ENCODE measurements at regions of chr3 and their contacts with region 1.

Region 1: DNA sequence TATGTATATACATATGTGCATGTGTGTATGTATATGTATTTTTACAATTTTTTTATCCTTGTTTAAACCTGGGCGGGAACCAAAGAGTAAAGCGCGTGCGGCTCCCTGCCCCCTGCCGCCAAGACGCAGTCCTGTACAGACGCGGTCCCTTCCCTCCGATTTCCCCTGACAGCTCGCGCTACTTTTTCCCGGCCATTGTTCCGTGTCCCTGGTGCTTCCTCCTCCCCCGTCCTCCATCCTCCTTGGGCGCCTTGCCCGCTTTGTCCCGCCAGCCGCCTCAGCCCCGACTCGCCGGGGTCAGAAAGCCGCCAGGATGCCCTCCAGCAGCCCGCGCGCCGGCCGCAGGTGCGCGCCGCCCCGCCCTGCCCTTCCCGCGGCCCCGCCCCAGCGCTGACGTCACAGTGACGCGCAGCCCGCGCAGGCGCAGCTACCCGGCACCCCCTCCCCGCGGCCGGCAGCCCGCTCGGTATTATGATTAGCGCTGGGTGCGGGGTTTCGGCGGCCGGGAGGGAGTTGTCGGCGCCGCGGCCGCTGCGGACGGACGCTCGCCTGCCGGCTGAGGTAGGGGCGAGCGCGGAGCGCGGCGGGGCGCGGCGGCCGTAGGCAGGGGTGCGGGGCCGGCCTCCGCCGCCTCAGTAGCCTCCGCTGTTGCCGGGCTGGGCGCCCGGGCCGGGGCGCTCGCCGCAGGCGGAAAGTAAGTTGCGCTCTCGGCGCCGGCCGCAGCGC is at the start of gene SNRK:
- DNase-seq: peak; percentile 86 to 97 (median 92)
- H3K4me3 ChIP-seq: peak within 1 kb of the TSS; percentile 84 to 88
- H3K4me3 Mint-ChIP-seq: peak within 1 kb of the TSS; percentile 98 to 100 (median 99)
- H3K27ac ChIP-seq: peak within 1 kb of the TSS; percentile 78
- H3K27ac Mint-ChIP-seq: peak within 1 kb of the TSS; percentile 99 to 100 (median 100)
- H3K4me1 ChIP-seq: peaks cover 32% of the 10 kb centered on the region
- H3K4me1 Mint-ChIP-seq: peaks cover 28 to 46% (median 32%) of the 10 kb centered on the region in 4 donors
- H3K27me3 ChIP-seq: no peaks in the 10 kb centered on the region
- H3K27me3 Mint-ChIP-seq: peaks cover 0 to 2% of the 10 kb centered on the region in 2 donors
- total RNA-seq, gene SNRK: 104 to 108 TPM

Region 2: DNA sequence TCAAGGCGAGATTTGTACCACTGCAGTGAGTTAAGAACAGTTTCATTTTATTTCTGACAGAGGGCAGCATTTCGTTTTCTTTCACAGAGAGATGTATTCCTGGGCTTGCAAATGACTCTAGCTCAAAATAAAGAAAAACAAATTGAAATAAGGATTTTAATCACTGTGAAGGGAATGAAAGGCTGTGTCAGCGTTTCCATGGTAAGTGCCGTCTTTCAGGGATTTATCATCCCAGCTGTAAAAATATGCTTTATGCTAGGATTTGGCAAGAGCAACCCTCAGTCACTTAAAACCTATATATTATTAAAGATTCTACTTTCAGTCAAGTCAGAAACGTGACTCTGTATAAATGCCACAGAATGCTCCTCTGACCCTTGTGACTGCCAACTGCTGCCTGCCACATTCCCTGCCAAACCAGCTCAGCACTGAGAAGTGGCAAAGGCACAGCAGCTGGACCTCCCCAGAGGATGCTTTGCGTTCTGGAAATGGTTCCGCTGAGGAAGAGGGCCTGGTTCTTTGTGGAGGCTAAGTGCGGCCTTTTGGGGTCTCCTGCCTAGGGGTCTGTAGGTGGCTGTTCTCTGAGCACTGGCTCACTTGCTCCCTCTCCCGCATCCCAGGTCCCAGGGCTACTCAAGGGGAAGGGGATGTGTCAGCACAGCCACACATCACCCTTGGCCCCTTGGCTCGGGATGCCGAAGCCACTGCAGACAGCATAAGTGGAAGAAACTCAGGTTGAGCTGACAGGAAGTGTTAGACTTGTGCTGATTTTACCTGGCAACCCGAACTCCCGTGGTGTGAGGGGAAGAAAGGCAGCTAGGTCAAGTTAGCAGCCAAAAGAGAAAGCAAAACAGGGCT is 123.8 kb before region 1 on chr3:
- CTCF ChIA-PET with region 1: interaction called, 16 read pairs
- POLR2A ChIA-PET with region 1: interaction called, 36 read pairs
- intact Hi-C with region 1: loop called (anchors 1 kb)
- DNase-seq: peak; percentile 66 to 79 (median 78)
- H3K4me3 ChIP-seq: peak overlapping the region; percentile 12 to 47
- H3K4me3 Mint-ChIP-seq: peak overlapping the region; percentile 80 to 92 (median 86)
- H3K27ac ChIP-seq: peak overlapping the region; percentile 60
- H3K27ac Mint-ChIP-seq: peak overlapping the region; percentile 92 to 100 (median 99)
- H3K4me1 ChIP-seq: peaks cover 27% of the 10 kb centered on the region
- H3K4me1 Mint-ChIP-seq: peaks cover 20 to 32% (median 27%) of the 10 kb centered on the region in 4 donors
- H3K27me3 ChIP-seq: no peaks in the 10 kb centered on the region
- H3K27me3 Mint-ChIP-seq: no peaks in the 10 kb centered on the region

Region 3: GRCh38 chr3:43223670-43224364 is 62.5 kb before region 1 on chr3:
- CTCF ChIA-PET with region 1: interaction called, 5 read pairs
- POLR2A ChIA-PET with region 1: interaction called, 3 read pairs
- intact Hi-C with region 1: loop called (anchors 2 kb)
- DNase-seq: peak in 4 of 5 donors; percentile 14 to 30 (median 24)
- H3K4me3 ChIP-seq: no peak overlapping the region
- H3K4me3 Mint-ChIP-seq: peak overlapping the region in 2 of 8 donors; percentile 18 to 55
- H3K27ac ChIP-seq: no peak overlapping the region
- H3K27ac Mint-ChIP-seq: peak overlapping the region in 3 of 7 donors; percentile 6 to 52 (median 38)
- H3K4me1 ChIP-seq: peaks cover 43% of the 10 kb centered on the region
- H3K4me1 Mint-ChIP-seq: peaks cover 35 to 53% (median 48%) of the 10 kb centered on the region in 4 donors
- H3K27me3 ChIP-seq: no peaks in the 10 kb centered on the region
- H3K27me3 Mint-ChIP-seq: no peaks in the 10 kb centered on the region

Region 4: DNA sequence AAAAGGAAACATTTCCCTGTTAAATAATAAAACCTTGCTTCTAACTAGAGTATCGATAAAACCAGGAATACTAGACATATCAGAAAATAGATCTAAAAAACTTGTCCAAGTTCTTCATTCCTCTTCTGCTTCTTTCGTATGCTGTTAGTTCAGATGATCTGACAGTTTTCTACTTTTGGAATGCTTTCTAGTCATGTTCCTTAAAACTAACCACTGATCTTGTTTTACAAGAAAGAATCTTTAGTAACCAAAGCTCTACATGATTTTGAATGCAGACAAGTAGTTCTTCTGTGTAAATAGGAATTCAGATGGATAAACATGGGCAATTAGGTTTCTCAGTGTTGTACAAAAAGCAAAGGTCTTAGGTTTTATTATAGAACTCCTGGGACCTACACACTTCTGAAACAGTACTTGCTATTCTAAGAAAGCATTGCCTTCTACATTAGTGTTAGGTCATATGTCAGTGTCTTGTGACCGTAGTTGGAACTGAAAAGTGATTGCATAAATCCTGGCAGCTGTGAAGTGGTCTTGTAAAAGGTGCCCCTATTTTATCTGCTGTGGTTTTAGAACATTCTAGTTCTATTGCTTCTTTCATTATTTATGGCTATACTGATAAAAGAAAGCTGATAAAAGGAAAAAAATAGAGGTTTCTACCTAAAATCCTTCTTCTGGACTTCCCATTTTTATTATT is 40.8 kb after region 1 on chr3:
- CTCF ChIA-PET with region 1: interaction called, 4 read pairs
- POLR2A ChIA-PET with region 1: interaction called, 3 read pairs
- intact Hi-C with region 1: loop called (anchors 5 kb)
- DNase-seq: no peak
- H3K4me3 ChIP-seq: no peak overlapping the region
- H3K4me3 Mint-ChIP-seq: peak overlapping the region in 7 of 8 donors; percentile 12 to 72 (median 46)
- H3K27ac ChIP-seq: no peak overlapping the region
- H3K27ac Mint-ChIP-seq: peak overlapping the region; percentile 45 to 91 (median 77)
- H3K4me1 ChIP-seq: peaks cover 74% of the 10 kb centered on the region
- H3K4me1 Mint-ChIP-seq: peaks cover 48 to 81% (median 66%) of the 10 kb centered on the region in 4 donors
- H3K27me3 ChIP-seq: no peaks in the 10 kb centered on the region
- H3K27me3 Mint-ChIP-seq: no peaks in the 10 kb centered on the region

Region 5: GRCh38 chr3:43389388-43390254 is 103.3 kb after region 1 on chr3:
- CTCF ChIA-PET with region 1: interaction called, 8 read pairs
- POLR2A ChIA-PET with region 1: interaction called, 11 read pairs
- intact Hi-C with region 1: no loop called
- DNase-seq: peak; percentile 84 to 92 (median 87)
- H3K4me3 ChIP-seq: peak overlapping the region in 1 of 2 donors; percentile 48
- H3K4me3 Mint-ChIP-seq: peak overlapping the region; percentile 60 to 81 (median 68)
- H3K27ac ChIP-seq: peak overlapping the region; percentile 64
- H3K27ac Mint-ChIP-seq: peak overlapping the region; percentile 85 to 98 (median 96)
- H3K4me1 ChIP-seq: peaks cover 61% of the 10 kb centered on the region
- H3K4me1 Mint-ChIP-seq: peaks cover 66 to 97% (median 79%) of the 10 kb centered on the region in 4 donors
- H3K27me3 ChIP-seq: no peaks in the 10 kb centered on the region
- H3K27me3 Mint-ChIP-seq: no peaks in the 10 kb centered on the region